ENCODE measurements at regions of chr15 and their contacts with region 1.

Region 1: GRCh38 chr15:101251830-101252820 is at the start of gene CHSY1:
- DNase-seq: peak; percentile 89
- H3K4me3 Mint-ChIP-seq: peak within 1 kb of the TSS; percentile 83
- H3K27ac Mint-ChIP-seq: peak within 1 kb of the TSS; percentile 71
- H3K4me1 Mint-ChIP-seq: peaks cover 19% of the 10 kb centered on the region
- H3K27me3 Mint-ChIP-seq: no peaks in the 10 kb centered on the region
- CTCF ChIP-seq: peak; percentile 12
- total RNA-seq, gene CHSY1: 24.3 and 29.8 TPM in 2 replicates

Region 2: GRCh38 chr15:101014921-101015841 is 236.9 kb before region 1 on chr15:
- CTCF ChIA-PET with region 1: interaction called, 46 read pairs
- POLR2A ChIA-PET with region 1: interaction called, 3 read pairs
- intact Hi-C with region 1: no loop called
- DNase-seq: peak; percentile 73
- H3K4me3 Mint-ChIP-seq: no peak overlapping the region
- H3K27ac Mint-ChIP-seq: no peak overlapping the region
- H3K4me1 Mint-ChIP-seq: no peaks in the 10 kb centered on the region
- H3K27me3 Mint-ChIP-seq: no peaks in the 10 kb centered on the region
- CTCF ChIP-seq: peak; percentile 82

Region 3: DNA sequence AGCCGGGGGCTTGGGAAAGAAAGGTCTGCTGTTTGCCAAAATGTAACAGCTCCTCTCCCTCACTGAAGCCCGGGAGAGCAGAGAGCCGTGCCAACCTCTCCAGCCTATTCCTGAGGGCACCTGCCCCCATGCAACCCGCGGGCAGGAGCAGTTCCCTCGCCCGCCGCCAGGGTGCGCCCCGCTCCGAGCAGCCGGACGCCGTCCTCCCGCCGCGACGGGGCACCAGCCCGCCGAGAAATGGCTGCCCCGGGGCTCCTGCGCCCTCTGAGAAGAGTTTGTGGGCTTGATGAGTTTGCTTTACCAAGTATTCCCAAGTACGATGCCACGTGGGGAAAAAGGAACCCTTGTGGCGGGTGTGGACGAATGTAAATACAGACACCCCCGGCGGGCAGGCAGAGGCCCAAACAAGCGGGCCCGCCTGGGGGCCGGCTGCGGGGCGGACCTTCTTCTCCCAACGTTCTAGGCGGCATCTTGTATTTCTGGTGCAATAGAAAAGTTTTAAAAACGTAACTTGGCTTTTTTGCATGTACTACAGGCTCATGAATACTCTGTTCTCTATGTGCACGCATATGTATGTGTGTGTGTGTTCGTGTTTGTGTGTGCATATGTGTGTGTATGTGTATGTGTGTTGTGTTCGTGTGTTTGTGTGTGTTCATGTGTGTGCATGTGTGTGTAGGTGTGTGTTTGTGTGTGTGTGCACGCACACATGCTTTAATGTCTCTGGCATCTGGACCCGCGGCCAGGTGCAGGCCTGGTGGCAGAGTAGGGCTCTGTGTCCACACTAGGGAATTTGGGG is 163.1 kb before region 1 on chr15:
- CTCF ChIA-PET with region 1: interaction called, 62 read pairs
- POLR2A ChIA-PET with region 1: interaction called, 4 read pairs
- intact Hi-C with region 1: loop called (anchors 2 kb)
- DNase-seq: peak; percentile 61
- H3K4me3 Mint-ChIP-seq: no peak overlapping the region
- H3K27ac Mint-ChIP-seq: no peak overlapping the region
- H3K4me1 Mint-ChIP-seq: no peaks in the 10 kb centered on the region
- H3K27me3 Mint-ChIP-seq: no peaks in the 10 kb centered on the region
- CTCF ChIP-seq: peak; percentile 99

Region 4: GRCh38 chr15:101127506-101128076 is 124.5 kb before region 1 on chr15:
- CTCF ChIA-PET with region 1: interaction called, 4 read pairs
- POLR2A ChIA-PET with region 1: interaction called, 9 read pairs
- intact Hi-C with region 1: loop called (anchors 1 kb)
- DNase-seq: peak; percentile 86
- H3K4me3 Mint-ChIP-seq: peak overlapping the region; percentile 67
- H3K27ac Mint-ChIP-seq: peak overlapping the region; percentile 97
- H3K4me1 Mint-ChIP-seq: peaks cover 35% of the 10 kb centered on the region
- H3K27me3 Mint-ChIP-seq: no peaks in the 10 kb centered on the region
- CTCF ChIP-seq: no peak

Region 5: DNA sequence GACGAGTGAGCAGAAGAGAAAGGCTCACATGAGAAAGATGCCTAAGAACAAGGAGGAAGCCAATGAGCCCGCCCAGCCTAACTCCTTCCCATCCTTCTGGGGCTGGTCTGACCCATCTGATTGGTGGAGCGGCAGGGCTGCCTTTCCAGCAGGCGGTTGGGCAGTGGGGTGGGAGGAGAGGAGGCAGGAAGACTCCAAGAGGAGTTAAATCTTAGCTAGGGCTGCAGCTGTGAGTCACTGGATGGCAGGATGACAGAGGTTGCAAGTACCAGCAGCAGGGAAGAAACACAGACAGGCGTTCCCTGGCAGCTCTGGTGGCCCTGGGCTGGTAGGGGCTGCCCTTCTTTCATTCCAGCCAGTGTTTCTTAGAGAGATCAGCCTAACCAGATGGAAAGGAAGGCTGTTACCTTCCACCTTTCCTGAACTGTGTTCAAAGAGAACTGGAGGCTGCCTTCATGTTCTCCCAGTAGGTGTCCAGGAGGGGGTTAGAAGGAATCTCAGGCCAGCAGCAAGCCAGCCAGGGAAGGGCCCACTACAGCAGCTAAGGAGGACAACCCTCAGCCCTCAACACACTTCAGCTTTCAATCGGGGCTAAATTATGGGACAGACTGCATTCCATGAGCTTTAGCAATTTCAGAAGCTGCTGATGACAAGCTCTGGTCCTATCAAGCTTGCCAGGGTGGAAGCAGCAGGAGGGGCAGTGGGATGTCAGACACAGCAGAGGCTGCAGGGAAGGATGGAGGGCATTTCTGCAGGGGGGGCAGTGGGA is 50.5 kb before region 1 on chr15:
- CTCF ChIA-PET with region 1: interaction called, 5 read pairs
- POLR2A ChIA-PET with region 1: interaction called, 7 read pairs
- intact Hi-C with region 1: loop called (anchors 2 kb)
- DNase-seq: peak; percentile 95
- H3K4me3 Mint-ChIP-seq: peak overlapping the region; percentile 7
- H3K27ac Mint-ChIP-seq: no peak overlapping the region
- H3K4me1 Mint-ChIP-seq: peaks cover 47% of the 10 kb centered on the region
- H3K27me3 Mint-ChIP-seq: no peaks in the 10 kb centered on the region
- CTCF ChIP-seq: no peak